Activated CD4-positive, alpha-beta T cell treated with anti-CD3 and anti-CD28 coated beads for 36 hours (primary cell): ENCODE measurements at regions of chr2 and their contacts with region 1.

Region 1: GRCh38 chr2:97710596-97711386 is 2.6 kb upstream of the ZAP70 start:
- DNase-seq: peak; percentile 52
- ATAC-seq: no peak
- H3K4me3 Mint-ChIP-seq: no peak overlapping the region
- H3K27ac Mint-ChIP-seq: peak overlapping the region; percentile 51
- H3K4me1 Mint-ChIP-seq: peaks cover 45% of the 10 kb centered on the region
- H3K27me3 Mint-ChIP-seq: no peaks in the 10 kb centered on the region

Region 2: DNA sequence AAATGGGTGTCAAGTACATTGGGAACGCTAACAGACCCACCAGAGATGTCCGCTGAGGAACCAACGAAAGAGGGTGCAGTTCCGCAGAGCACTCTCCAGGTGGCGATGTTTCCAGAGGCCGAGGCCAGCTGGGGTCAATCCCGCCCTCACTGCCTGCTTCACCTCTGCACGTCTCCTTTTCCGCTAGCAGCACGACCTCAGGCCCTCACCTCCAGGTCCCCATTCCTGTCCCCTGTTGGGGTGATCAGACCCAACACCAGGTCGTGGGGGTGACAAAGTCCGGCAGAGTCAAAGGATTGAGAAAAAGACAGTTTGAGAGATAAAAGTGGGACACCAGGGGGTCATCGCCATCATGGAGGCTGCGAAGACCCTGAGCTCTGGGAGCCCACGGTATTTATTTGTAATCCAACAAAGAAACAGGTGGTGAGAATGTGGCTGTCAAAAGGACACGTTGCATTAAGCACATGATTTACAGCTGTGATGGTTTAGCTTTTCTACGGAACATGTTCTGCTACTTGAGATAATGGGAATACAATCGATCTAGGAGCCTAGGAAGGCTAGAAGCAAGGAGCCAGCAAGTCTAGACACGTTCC is 29.9 kb after region 1 on chr2:
- CTCF ChIA-PET with region 1: interaction called, 26 read pairs
- POLR2A ChIA-PET with region 1: interaction called, 3 read pairs
- intact Hi-C with region 1: no loop called
- DNase-seq: peak; percentile 73
- ATAC-seq: peak; percentile 25
- H3K4me3 Mint-ChIP-seq: no peak overlapping the region
- H3K27ac Mint-ChIP-seq: peak overlapping the region; percentile 59
- H3K4me1 Mint-ChIP-seq: peaks cover 43% of the 10 kb centered on the region
- H3K27me3 Mint-ChIP-seq: no peaks in the 10 kb centered on the region

Region 3: GRCh38 chr2:97751752-97752151 is 41.0 kb after region 1 on chr2:
- CTCF ChIA-PET with region 1: interaction called, 14 read pairs
- POLR2A ChIA-PET with region 1: interaction called, 3 read pairs
- intact Hi-C with region 1: loop called in 1 of 2 experiments (anchors 1 kb)
- DNase-seq: no peak
- ATAC-seq: no peak
- H3K4me3 Mint-ChIP-seq: no peak overlapping the region
- H3K27ac Mint-ChIP-seq: no peak overlapping the region
- H3K4me1 Mint-ChIP-seq: peaks cover 14% of the 10 kb centered on the region
- H3K27me3 Mint-ChIP-seq: no peaks in the 10 kb centered on the region

Region 4: DNA sequence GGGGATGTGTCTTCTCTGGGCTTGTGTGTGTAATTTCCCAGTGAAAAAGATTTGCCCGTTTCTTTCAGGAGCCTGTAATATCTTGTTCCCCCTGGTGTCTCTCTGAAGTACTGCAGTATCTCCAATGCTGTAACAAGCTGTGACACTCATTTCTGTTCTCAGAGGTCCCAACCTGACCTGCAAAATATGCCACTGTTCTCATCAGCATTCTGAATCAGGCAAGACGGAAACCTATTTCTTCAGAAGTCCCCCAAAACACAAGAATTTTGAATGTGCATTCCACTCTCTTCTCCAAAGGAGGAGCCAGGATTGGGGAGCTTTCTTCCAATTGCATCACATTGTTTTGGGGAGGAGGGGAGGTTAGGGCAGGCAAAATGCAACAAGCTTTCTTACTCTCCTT is 558.5 kb after region 1 on chr2:
- CTCF ChIA-PET with region 1: no interaction called
- POLR2A ChIA-PET with region 1: no interaction called
- intact Hi-C with region 1: loop called in 1 of 2 experiments (anchors 2 kb)
- DNase-seq: peak; percentile 20
- ATAC-seq: peak; percentile 65
- H3K4me3 Mint-ChIP-seq: no peak overlapping the region
- H3K27ac Mint-ChIP-seq: no peak overlapping the region
- H3K4me1 Mint-ChIP-seq: no peaks in the 10 kb centered on the region
- H3K27me3 Mint-ChIP-seq: peaks cover under 1% of the 10 kb centered on the region

Region 5: GRCh38 chr2:98385050-98385699 is 674.4 kb after region 1 on chr2:
- CTCF ChIA-PET with region 1: interaction called, 7 read pairs
- POLR2A ChIA-PET with region 1: no interaction called
- intact Hi-C with region 1: loop called (anchors 1 to 10 kb)
- DNase-seq: peak; percentile 88
- ATAC-seq: peak; percentile 89
- H3K4me3 Mint-ChIP-seq: no peak overlapping the region
- H3K27ac Mint-ChIP-seq: no peak overlapping the region
- H3K4me1 Mint-ChIP-seq: peaks cover 3% of the 10 kb centered on the region
- H3K27me3 Mint-ChIP-seq: peaks cover 5% of the 10 kb centered on the region